Breast epithelium (tissue), 4 donors: ENCODE measurements at regions of chr10 and their contacts with region 1.

Region 1: GRCh38 chr10:70540089-70540788 is 61.7 kb downstream of the PALD1 start:
- DNase-seq: no peak
- H3K4me3 ChIP-seq: no peak overlapping the region
- H3K27ac ChIP-seq: no peak overlapping the region
- H3K4me1 ChIP-seq: no peaks in the 10 kb centered on the region
- H3K27me3 ChIP-seq: no peaks in the 10 kb centered on the region
- CTCF ChIP-seq: peak in 1 of 3 donors; percentile 32
- POLR2A ChIP-seq: no peak

Region 2: GRCh38 chr10:70584909-70585544 is 44.8 kb after region 1 on chr10:
- intact Hi-C with region 1: no loop called
- DNase-seq: no peak
- H3K4me3 ChIP-seq: no peak overlapping the region
- H3K27ac ChIP-seq: no peak overlapping the region
- H3K4me1 ChIP-seq: no peaks in the 10 kb centered on the region
- H3K27me3 ChIP-seq: no peaks in the 10 kb centered on the region
- CTCF ChIP-seq: no peak
- POLR2A ChIP-seq: no peak

Region 3: GRCh38 chr10:70596110-70596798 is 56.0 kb after region 1 on chr10:
- intact Hi-C with region 1: no loop called
- DNase-seq: peak in 1 of 2 donors; percentile 12
- H3K4me3 ChIP-seq: no peak overlapping the region
- H3K27ac ChIP-seq: no peak overlapping the region
- H3K4me1 ChIP-seq: no peaks in the 10 kb centered on the region
- H3K27me3 ChIP-seq: no peaks in the 10 kb centered on the region
- CTCF ChIP-seq: no peak
- POLR2A ChIP-seq: no peak

Region 4: DNA sequence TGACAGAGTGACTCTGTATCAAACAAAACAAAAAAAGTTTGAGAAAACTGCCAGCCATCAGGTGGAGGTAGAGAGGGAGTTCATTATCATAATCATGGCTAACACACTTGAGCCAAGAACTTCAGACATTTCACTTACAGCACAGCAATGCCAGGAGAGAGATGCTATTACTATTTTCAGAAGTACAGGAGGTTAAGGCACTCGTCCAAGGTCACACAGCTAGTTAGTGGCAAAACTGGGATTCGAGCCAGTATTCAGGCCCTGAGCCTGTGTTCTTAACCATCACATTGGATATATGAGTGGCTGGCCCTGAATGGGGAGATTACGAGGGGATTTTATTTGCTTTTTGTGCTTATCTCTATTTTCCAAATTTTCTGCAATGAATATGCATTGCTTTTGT is 647.4 kb after region 1 on chr10:
- intact Hi-C with region 1: loop called (anchors 5 kb)
- DNase-seq: no peak
- H3K4me3 ChIP-seq: no peak overlapping the region
- H3K27ac ChIP-seq: no peak overlapping the region
- H3K4me1 ChIP-seq: no peaks in the 10 kb centered on the region
- H3K27me3 ChIP-seq: no peaks in the 10 kb centered on the region
- CTCF ChIP-seq: no peak
- POLR2A ChIP-seq: no peak